CD4-positive, alpha-beta memory T cell (primary cell): ENCODE measurements at regions of chrX and their contacts with region 1.

Region 1: DNA sequence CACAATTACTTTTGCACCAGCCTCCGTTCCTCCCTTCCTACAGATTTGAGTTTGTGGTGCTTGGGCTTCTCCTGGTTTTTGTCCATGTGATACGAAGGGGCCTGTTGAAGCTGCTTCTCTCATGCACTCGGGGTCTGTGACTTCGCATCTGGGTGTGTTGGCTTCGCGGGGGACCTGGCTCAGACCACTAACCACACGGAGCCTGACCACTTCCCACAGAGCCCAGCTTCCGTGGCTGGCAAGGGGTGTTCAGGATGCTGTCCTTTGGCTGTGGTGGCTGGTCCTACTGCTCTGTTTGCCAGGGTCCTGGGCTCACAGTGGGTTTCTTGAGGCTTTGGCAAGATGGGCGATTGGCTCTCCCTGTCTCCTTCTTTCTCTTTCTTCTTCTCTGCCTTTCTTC is 19.8 kb upstream of the XG start:
- DNase-seq: no peak
- H3K4me3 ChIP-seq: no peak overlapping the region
- H3K4me3 Mint-ChIP-seq: no peak overlapping the region
- H3K27ac ChIP-seq: no peak overlapping the region
- H3K27ac Mint-ChIP-seq: peak overlapping the region in 4 of 7 donors; percentile 32 to 92 (median 75)
- H3K4me1 ChIP-seq: no peaks in the 10 kb centered on the region
- H3K4me1 Mint-ChIP-seq: peaks cover 0 to 8% (median 7%) of the 10 kb centered on the region in 4 donors
- H3K27me3 ChIP-seq: no peaks in the 10 kb centered on the region
- H3K27me3 Mint-ChIP-seq: no peaks in the 10 kb centered on the region

Region 2: DNA sequence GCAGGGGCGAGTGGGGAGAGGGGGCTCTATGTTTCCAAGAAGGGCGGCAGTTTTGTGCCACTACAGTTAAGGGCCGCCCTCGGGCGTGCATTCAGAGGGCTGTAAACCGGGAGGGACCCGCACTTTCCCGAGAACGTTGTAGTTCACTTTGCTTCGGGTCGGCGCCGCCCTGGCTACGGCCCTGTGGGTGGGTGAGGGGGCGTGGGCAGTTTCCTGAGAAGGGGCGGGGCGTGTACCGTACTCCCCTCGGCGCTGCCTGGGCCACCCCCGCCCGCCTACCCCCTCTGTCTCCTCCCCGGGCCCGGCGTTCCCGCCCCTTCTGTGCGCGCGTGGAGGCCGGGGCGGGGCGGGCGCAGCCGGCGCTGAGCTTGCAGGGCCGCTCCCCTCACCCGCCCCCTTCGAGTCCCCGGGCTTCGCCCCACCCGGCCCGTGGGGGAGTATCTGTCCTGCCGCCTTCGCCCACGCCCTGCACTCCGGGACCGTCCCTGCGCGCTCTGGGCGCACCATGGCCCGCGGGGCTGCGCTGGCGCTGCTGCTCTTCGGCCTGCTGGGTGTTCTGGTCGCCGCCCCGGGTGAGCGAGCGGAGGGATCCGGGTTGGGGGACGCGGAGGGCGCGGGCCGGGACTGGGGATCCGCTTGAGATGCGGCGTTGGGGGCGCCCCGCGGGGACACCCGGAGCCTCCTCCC is 41.1 kb before region 1 on chrX and contains the start of gene CD99:
- CTCF ChIA-PET with region 1: no interaction called
- POLR2A ChIA-PET with region 1: no interaction called
- intact Hi-C with region 1: loop called (anchors 5 kb)
- DNase-seq: peak; percentile 87 to 95 (median 88)
- H3K4me3 ChIP-seq: peak within 1 kb of the TSS; percentile 96 to 98
- H3K4me3 Mint-ChIP-seq: peak within 1 kb of the TSS; percentile 92 to 99 (median 96)
- H3K27ac ChIP-seq: peak within 1 kb of the TSS; percentile 72
- H3K27ac Mint-ChIP-seq: peak within 1 kb of the TSS; percentile 86 to 97 (median 93)
- H3K4me1 ChIP-seq: peaks cover 34% of the 10 kb centered on the region
- H3K4me1 Mint-ChIP-seq: peaks cover 23 to 48% (median 33%) of the 10 kb centered on the region in 4 donors
- H3K27me3 ChIP-seq: no peaks in the 10 kb centered on the region
- H3K27me3 Mint-ChIP-seq: no peaks in the 10 kb centered on the region
- total RNA-seq, gene CD99: 283 to 289 TPM